Activated naive CD4-positive, alpha-beta T cell treated with anti-CD3 and anti-CD28 coated beads, Interleukin-2, amount 10 ng/mL, durations not matched to agents 7 days and 5 days (primary cell): ENCODE measurements at regions of chr12 and their contacts with region 1.

Region 1: GRCh38 chr12:54214553-54215406 is 26.0 kb upstream of the SMUG1 start:
- DNase-seq: peak; percentile 93
- H3K4me3 Mint-ChIP-seq: peak overlapping the region; percentile 74
- H3K27ac Mint-ChIP-seq: peak overlapping the region; percentile 82
- H3K4me1 Mint-ChIP-seq: peaks cover 52% of the 10 kb centered on the region
- H3K27me3 Mint-ChIP-seq: peaks cover 57% of the 10 kb centered on the region

Region 2: DNA sequence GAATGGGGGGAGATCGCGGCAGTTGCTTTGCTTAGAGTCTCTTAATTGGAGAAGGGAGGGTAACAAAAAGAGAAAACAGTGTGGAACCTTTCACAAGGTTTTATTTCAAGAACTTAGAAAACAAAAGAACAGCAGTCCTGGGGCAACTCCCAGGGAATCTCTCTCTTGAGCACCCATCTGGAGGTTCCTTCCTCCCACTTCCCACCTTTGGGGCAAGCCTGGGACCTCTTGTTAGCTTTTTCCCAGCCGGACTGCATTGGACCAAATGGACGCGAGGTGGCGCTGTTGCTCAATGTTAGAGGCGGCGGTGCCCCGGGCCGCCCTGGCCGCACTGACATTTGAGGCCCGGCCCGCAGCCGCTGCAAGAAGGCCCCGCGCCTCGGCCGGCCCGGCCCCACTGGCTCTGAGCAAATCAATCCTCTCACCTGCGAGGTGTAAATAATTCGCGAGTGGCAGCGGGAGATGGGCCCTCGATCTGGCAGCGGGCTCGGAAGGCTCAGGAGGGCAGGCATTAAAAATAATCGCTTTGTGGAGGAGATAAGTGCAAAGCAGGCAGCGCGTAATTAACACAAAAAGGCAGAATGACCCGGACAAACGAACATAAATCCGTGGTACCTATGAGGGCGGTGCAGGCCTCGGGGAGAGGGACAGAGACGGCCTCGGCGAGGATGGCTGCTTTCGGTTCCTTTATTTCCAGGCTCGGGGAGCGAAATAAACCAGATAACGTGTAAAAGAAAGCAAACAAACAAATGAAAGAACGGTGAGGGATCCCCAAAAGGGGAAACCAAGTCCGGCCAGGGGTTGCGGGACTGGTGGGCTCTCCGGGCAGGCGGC is 208.7 kb before region 1 on chr12:
- CTCF ChIA-PET with region 1: interaction called, 54 read pairs
- DNase-seq: peak; percentile 87
- H3K4me3 Mint-ChIP-seq: peak overlapping the region; percentile 67
- H3K27ac Mint-ChIP-seq: no peak overlapping the region
- H3K4me1 Mint-ChIP-seq: peaks cover 20% of the 10 kb centered on the region
- H3K27me3 Mint-ChIP-seq: peaks cover 100% of the 10 kb centered on the region

Region 3: DNA sequence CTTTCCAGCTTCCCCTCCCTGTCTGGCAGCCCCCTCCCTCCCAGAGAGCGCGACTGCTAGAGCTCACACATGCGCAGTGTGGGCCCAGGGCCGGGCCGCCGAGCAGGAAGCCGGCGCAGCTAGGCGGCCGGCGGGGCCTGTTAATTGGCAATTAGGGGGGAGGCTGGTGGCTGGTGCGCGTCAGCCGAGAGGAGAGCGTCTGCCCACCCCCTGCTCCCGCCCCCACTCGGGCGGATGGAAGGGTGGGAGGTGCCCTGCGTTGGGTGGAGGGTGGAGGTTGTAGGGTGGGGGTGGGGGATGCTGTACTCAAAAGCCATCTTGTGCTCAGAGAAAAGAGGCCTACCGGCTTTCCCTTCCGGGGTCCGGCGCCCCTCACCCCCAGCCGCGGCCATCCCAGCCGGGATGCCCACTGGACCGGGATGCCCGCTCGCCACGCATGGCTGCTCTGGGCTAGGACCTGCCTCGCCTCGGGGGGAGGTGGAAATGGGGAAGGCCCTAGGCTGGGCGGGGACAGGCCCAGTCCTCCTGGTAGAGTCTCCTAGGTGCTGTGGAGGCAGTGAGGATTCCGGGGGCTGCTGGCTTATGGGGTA is 196.8 kb before region 1 on chr12:
- CTCF ChIA-PET with region 1: interaction called, 10 read pairs
- DNase-seq: peak; percentile 80
- H3K4me3 Mint-ChIP-seq: peak overlapping the region; percentile 73
- H3K27ac Mint-ChIP-seq: no peak overlapping the region
- H3K4me1 Mint-ChIP-seq: peaks cover 26% of the 10 kb centered on the region
- H3K27me3 Mint-ChIP-seq: peaks cover 100% of the 10 kb centered on the region

Region 4: GRCh38 chr12:54191550-54192022 is 23.2 kb before region 1 on chr12:
- CTCF ChIA-PET with region 1: interaction called, 48 read pairs
- DNase-seq: peak; percentile 85
- H3K4me3 Mint-ChIP-seq: no peak overlapping the region
- H3K27ac Mint-ChIP-seq: no peak overlapping the region
- H3K4me1 Mint-ChIP-seq: peaks cover 20% of the 10 kb centered on the region
- H3K27me3 Mint-ChIP-seq: peaks cover 66% of the 10 kb centered on the region

Region 5: GRCh38 chr12:54201001-54201794 is 13.6 kb before region 1 on chr12:
- CTCF ChIA-PET with region 1: interaction called, 12 read pairs
- DNase-seq: peak; percentile 77
- H3K4me3 Mint-ChIP-seq: no peak overlapping the region
- H3K27ac Mint-ChIP-seq: no peak overlapping the region
- H3K4me1 Mint-ChIP-seq: no peaks in the 10 kb centered on the region
- H3K27me3 Mint-ChIP-seq: peaks cover 90% of the 10 kb centered on the region

Region 6: DNA sequence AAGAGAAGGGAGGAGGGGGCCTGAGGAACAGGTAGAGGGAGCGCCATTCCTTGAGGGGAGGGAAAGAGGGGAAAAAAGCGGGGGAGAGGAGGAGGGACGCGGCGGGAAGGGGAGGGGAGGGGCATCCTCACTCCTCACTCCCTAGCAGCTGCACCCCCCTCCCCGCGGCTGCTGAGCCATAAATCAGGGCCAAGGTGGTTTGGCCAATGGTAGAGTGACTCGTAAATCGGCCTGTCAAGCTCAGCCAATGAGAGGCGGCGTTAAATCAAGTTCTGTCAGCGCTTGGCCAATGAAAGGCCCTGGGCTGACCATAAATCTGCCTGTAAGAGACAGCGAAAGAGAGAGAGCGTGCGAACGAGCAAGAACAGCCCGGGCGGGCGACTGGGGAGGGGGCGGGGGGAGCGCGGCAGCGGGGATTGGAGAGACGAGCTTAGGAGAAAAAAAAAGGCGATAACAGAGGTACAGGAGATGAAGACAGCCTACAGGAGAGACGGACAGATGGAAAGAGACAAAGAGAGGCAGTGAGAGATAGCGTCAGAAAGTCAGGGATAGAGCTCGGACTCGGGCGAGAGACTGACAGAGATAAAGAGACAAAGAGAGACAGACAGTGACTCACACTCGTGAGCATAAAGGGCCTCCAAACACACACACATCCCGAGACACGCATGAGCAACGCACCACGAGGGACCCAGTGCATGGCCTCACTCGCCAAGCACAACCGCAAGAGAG is 144.4 kb after region 1 on chr12:
- CTCF ChIA-PET with region 1: interaction called, 41 read pairs
- DNase-seq: peak; percentile 97
- H3K4me3 Mint-ChIP-seq: no peak overlapping the region
- H3K27ac Mint-ChIP-seq: no peak overlapping the region
- H3K4me1 Mint-ChIP-seq: peaks cover 32% of the 10 kb centered on the region
- H3K27me3 Mint-ChIP-seq: peaks cover 6% of the 10 kb centered on the region

Region 7: DNA sequence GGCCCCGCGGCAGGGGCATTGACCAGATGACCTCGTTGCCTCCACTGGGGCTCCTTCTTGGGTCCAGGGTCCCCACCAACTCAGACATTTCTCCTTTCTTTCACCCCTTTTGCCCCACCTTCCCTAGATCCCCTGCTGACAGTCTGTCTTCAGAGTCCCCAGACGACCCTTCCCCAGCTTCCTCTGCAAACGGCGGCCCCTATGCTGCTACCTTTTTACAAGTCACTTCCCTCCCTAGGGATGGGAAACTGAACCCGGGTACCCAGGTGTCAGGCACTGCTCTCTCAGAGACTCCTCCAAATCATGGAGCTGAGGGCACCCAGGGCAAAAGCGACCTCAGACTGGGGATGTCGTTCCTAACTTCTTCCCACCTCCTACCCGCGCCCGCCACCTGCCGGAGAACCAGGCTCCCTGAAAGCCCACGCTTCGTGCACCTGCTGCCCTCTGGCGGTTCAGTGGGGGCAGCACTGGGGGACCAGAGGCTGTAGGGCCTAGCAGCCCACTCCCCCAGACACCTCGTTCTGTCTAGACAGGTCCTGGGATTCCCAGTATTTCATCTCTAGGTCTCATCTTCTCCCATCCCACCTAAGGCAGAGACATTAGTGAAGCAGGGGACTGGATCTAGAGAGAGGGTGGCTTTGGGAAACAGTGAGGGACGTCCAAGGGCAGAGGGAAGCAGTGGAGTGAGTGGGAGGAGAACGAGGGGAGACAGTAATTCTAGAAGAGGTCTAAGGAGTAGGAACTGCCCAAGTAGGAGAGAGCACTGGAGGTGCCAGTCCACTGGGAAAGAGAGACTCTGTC is 164.8 kb after region 1 on chr12:
- CTCF ChIA-PET with region 1: interaction called, 15 read pairs
- DNase-seq: peak; percentile 94
- H3K4me3 Mint-ChIP-seq: peak overlapping the region; percentile 41
- H3K27ac Mint-ChIP-seq: no peak overlapping the region
- H3K4me1 Mint-ChIP-seq: peaks cover 9% of the 10 kb centered on the region
- H3K27me3 Mint-ChIP-seq: peaks cover 48% of the 10 kb centered on the region